Activated B cell treated with CpG ODN at 0.5 μM for 24 hours (primary cell): ENCODE measurements at regions of chr15 and their contacts with region 1.

Region 1: GRCh38 chr15:59247364-59247763 is 40.7 kb downstream of the LDHAL6B start:
- DNase-seq: no peak
- ATAC-seq: peak; percentile 52
- H3K4me3 Mint-ChIP-seq: no peak overlapping the region
- H3K27ac Mint-ChIP-seq: peak overlapping the region; percentile 24
- H3K4me1 Mint-ChIP-seq: peaks cover 71% of the 10 kb centered on the region
- H3K27me3 Mint-ChIP-seq: no peaks in the 10 kb centered on the region
- CTCF ChIP-seq: no peak

Region 2: DNA sequence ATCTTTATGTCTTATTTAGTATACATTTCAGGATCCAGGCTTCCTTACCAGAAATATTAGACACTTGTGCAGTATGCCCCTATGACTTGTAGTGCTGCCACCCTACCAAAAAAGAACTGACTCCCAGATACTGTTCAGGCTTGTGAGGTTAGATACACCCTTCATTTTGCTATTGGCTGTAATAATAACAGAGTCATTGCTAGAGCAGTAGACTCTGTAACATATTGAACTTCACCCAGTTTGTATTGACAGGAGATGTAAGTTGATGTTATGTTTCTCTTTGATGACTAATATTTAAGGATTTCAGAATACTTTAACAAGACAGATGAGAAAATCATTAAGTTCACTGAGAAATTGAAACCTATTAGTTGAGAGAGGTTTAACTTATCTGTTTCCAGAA is 227.0 kb before region 1 on chr15:
- CTCF ChIA-PET with region 1: no interaction called
- POLR2A ChIA-PET with region 1: no interaction called
- intact Hi-C with region 1: no loop called
- DNase-seq: no peak
- ATAC-seq: no peak
- H3K4me3 Mint-ChIP-seq: no peak overlapping the region
- H3K27ac Mint-ChIP-seq: no peak overlapping the region
- H3K4me1 Mint-ChIP-seq: peaks cover 15% of the 10 kb centered on the region
- H3K27me3 Mint-ChIP-seq: no peaks in the 10 kb centered on the region
- CTCF ChIP-seq: no peak

Region 3: DNA sequence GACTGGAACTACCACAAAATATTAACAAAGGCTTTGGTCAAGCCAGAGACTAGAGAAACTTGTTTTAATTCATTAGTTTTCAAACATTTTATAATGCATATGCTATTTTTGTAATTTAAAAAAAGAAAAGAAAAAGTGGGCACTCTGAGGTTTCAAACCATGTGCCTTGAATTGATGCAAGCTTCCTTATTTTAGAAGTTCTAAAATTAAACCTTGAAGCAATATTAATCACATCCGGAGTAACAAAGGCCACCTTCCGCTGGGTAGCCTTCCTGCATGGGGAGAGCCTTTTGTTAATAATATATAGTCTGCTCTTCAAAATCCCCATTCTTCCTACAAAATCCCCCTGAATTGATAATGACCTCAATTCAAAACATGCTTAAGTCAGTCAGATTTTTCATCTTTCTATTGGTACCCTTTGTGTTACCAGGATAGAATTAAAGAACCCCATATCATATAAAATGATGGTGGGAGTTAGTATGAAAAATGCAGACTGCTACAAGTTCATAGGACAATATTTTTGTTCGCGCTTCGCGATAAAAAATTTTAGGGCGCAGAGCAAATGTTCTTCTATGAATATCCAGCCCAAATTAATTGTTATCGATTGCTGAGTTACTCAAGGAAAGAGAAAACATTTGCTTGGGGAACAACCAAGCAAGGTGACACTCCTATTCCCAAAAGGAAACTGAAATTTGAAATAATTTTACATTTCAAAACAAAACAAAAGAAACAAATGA is 10.1 kb before region 1 on chr15:
- CTCF ChIA-PET with region 1: interaction called, 14 read pairs
- POLR2A ChIA-PET with region 1: interaction called, 5 read pairs
- intact Hi-C with region 1: loop called (anchors 1 kb)
- DNase-seq: no peak
- ATAC-seq: peak; percentile 84
- H3K4me3 Mint-ChIP-seq: peak overlapping the region; percentile 48
- H3K27ac Mint-ChIP-seq: peak overlapping the region; percentile 88
- H3K4me1 Mint-ChIP-seq: peaks cover 46% of the 10 kb centered on the region
- H3K27me3 Mint-ChIP-seq: no peaks in the 10 kb centered on the region
- CTCF ChIP-seq: no peak

Region 4: DNA sequence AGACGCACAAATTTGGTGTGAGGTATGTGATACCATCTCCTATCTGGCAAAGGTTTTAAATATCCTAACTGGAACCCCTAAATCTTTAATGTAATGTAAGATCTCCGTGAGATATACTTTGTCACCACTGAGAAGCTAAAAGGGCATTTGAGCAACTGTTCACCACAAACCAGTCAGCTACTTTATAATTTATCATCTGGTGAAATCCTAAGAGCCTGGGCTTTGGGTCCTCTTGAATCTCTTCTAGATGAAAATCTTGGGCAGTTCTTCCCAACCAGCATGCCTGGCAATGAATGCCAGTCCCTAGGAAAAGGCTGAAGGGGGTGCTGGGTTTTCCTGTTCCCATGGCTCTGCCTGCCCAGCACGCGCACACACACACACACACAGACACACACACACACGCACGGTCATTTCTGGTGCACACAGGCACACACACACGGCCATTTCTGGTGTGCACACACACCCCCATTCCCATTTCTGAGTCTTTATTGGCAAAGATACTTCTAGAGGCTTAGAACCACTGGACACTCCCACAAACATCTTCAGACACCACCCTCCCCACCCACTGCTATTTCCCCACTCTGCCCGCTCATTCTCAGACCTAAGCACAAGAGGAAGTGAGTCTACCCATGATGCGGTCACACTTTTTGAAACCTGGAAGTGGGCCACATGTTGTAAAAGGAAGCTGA is 52.7 kb after region 1 on chr15:
- CTCF ChIA-PET with region 1: interaction called, 8 read pairs
- POLR2A ChIA-PET with region 1: interaction called, 6 read pairs
- intact Hi-C with region 1: loop called (anchors 1 kb)
- DNase-seq: peak; percentile 58
- ATAC-seq: peak; percentile 76
- H3K4me3 Mint-ChIP-seq: peak overlapping the region; percentile 71
- H3K27ac Mint-ChIP-seq: peak overlapping the region; percentile 94
- H3K4me1 Mint-ChIP-seq: peaks cover 93% of the 10 kb centered on the region
- H3K27me3 Mint-ChIP-seq: no peaks in the 10 kb centered on the region
- CTCF ChIP-seq: no peak

Region 5: DNA sequence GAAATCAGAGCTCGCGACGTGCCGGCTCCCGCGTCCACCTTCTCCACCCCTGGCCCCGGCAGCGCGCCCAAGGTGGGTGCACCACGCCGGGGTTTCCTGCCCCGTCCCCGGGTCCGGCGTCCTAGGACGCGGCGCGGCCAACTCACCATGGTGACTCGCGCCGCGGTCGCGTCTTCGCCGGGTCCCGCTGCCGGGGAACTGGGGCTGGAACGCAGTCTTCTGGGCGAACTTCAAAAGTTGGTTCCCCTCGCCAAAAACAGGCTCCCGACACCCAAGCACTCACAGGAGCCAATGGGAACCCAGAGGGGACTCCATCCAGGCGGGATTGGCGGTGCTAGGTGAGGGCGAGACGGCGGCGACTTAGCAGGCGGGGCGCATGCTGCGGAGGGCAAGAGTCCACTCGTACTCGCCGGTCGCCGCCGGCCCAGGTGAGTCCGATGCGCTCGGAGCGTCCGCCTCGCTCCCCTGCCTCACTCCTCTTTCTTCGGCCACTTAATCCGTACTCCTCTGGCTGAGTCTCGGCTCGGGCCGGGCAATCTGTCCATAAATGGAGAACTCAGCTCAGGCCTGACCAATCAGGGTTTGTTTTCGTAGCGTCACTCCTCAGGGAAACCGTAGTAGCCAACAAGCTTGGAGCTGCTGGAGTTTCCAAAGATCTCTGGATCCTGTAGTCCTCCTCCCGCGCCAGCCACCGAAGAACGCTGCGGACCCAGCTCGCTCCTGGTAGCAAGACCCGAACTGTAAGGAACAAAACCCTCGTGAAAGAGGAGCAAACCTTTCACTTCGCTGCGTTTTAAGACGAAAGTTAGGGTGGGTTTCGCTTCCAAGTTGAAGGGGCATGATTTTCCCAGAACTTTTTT is 125.2 kb after region 1 on chr15 and contains the start of gene MYO1E:
- CTCF ChIA-PET with region 1: interaction called, 9 read pairs
- POLR2A ChIA-PET with region 1: interaction called, 5 read pairs
- intact Hi-C with region 1: loop called (anchors 2 kb)
- DNase-seq: peak; percentile 54
- ATAC-seq: peak; percentile 62
- H3K4me3 Mint-ChIP-seq: peak within 1 kb of the TSS; percentile 96
- H3K27ac Mint-ChIP-seq: peak within 1 kb of the TSS; percentile 89
- H3K4me1 Mint-ChIP-seq: peaks cover 64% of the 10 kb centered on the region
- H3K27me3 Mint-ChIP-seq: no peaks in the 10 kb centered on the region
- CTCF ChIP-seq: no peak
- total RNA-seq, gene MYO1E: 185 and 186 TPM in 2 replicates

Region 6: DNA sequence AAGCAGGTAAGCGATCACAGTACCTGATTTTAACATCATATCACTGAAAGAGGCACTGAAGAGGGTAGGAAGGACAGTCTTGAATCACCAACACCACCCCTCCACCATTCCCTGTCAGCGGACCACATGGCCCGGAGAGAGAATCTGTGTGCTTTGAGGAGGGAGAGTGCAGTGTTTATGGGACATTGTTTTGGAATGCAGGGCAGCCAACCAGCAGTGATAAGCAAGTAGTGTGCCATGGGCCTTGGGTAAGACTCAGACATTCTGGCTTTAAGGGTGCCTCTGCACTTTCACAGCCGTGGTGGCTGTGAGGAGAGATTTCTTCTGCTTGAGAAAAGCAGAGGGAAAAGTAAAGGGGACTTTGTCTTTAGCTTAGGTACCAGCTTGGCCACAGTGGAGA is 237.0 kb after region 1 on chr15:
- CTCF ChIA-PET with region 1: interaction called, 4 read pairs
- POLR2A ChIA-PET with region 1: interaction called, 5 read pairs
- intact Hi-C with region 1: loop called (anchors 2 kb)
- DNase-seq: no peak
- ATAC-seq: no peak
- H3K4me3 Mint-ChIP-seq: no peak overlapping the region
- H3K27ac Mint-ChIP-seq: no peak overlapping the region
- H3K4me1 Mint-ChIP-seq: peaks cover 12% of the 10 kb centered on the region
- H3K27me3 Mint-ChIP-seq: no peaks in the 10 kb centered on the region
- CTCF ChIP-seq: no peak

Region 7: GRCh38 chr15:60299452-60300047 is 1052.2 kb after region 1 on chr15:
- CTCF ChIA-PET with region 1: no interaction called
- POLR2A ChIA-PET with region 1: no interaction called
- intact Hi-C with region 1: no loop called
- DNase-seq: no peak
- ATAC-seq: no peak
- H3K4me3 Mint-ChIP-seq: no peak overlapping the region
- H3K27ac Mint-ChIP-seq: no peak overlapping the region
- H3K4me1 Mint-ChIP-seq: no peaks in the 10 kb centered on the region
- H3K27me3 Mint-ChIP-seq: peaks cover 2% of the 10 kb centered on the region
- CTCF ChIP-seq: no peak